Cardiac septum (tissue), 1 donor: ENCODE measurements at regions of chr5 and their contacts with region 1.

Region 1: GRCh38 chr5:31638748-31639418 is at the start of gene PDZD2:
- DNase-seq: peak; percentile 87
- total RNA-seq, gene PDZD2: 67.1 TPM

Region 2: DNA sequence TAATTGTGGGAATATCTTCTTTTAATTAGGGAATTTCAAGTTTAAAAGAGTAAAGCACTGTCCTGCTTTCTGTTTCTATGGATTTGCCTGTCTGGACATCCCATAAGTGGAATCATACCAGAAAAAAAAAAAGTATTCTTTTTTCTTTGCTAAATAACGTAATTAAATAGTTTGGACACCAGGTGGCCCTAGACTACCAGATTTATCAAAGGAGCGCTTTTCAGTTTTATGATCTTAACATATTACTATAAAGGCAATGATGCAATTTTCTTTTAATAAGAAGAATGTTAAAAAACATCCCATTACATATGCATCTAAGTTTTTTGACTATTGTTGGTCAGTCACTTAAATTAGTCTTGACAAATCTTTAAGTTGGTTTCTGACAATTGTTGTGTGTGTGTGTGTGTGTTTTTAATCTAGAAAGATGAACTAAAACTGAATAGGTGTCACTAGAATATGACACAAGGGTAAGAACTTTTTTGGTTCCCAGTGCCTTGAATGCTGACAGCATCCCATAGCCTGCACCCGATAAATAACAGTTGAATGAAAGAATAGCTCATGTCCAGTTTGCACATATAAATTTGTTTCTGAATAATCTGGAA is 57.3 kb before region 1 on chr5:
- intact Hi-C with region 1: loop called (anchors 2 kb)
- DNase-seq: no peak

Region 3: DNA sequence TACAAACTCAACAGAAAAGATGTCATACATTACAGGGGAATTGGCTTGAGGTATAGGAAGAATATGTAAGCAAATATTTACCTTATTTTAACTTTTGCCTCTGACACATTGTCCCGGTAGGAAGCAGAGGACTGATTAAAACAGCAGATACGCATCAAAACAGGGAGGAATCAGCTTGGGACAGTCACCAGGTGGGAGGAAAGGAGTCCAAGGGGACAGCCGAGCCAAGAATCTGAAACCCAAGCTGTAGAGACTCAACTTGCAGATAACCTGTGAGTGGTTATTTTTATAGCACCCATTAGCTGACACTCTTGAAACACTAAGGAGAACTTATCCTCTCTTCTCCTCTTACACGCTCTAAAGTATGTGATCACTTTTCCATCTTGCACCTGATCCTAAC is 22.4 kb after region 1 on chr5:
- intact Hi-C with region 1: loop called (anchors 1 kb)
- DNase-seq: peak; percentile 41

Region 4: DNA sequence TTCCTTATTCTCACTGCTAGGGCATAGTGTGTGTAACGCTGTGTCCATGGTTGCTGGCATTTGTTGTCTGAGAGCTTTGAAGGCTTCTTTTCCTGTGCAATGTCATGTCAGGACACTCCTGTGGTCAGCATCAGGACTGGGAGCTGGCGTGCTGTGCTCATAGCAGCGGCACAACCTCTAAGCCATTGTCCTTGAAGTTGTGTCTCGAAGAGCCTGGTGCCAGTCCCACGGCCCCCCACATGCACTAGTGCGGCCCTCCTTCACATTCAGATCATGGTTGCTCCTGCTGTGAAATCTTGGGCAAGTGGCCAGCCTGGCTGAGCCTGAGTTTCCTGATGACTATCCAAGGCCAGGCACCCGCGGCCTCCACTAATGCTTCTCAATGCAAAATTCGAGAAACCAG is 32.5 kb after region 1 on chr5:
- intact Hi-C with region 1: loop called (anchors 5 kb)
- DNase-seq: no peak

Region 5: GRCh38 chr5:31733371-31733770 is 94.5 kb after region 1 on chr5:
- intact Hi-C with region 1: loop called (anchors 5 kb)
- DNase-seq: no peak

Region 6: GRCh38 chr5:31770998-31771397 is 132.1 kb after region 1 on chr5:
- intact Hi-C with region 1: loop called (anchors 1 kb)
- DNase-seq: no peak

Region 7: GRCh38 chr5:31809050-31809870 is 170.4 kb after region 1 on chr5:
- intact Hi-C with region 1: loop called (anchors 1 kb)
- DNase-seq: peak; percentile 86